Esophagus muscularis mucosa (tissue), 4 donors: ENCODE measurements at regions of chr7 and their contacts with region 1.

Region 1: GRCh38 chr7:16918288-16918895 is 36.6 kb upstream of the AGR3 start:
- DNase-seq: no peak
- H3K4me3 ChIP-seq: no peak overlapping the region
- H3K27ac ChIP-seq: no peak overlapping the region
- H3K4me1 ChIP-seq: no peaks in the 10 kb centered on the region
- H3K27me3 ChIP-seq: no peaks in the 10 kb centered on the region
- CTCF ChIP-seq: peak; percentile 61 to 77 (median 75)
- EP300 ChIP-seq: no peak
- POLR2A ChIP-seq: no peak

Region 2: DNA sequence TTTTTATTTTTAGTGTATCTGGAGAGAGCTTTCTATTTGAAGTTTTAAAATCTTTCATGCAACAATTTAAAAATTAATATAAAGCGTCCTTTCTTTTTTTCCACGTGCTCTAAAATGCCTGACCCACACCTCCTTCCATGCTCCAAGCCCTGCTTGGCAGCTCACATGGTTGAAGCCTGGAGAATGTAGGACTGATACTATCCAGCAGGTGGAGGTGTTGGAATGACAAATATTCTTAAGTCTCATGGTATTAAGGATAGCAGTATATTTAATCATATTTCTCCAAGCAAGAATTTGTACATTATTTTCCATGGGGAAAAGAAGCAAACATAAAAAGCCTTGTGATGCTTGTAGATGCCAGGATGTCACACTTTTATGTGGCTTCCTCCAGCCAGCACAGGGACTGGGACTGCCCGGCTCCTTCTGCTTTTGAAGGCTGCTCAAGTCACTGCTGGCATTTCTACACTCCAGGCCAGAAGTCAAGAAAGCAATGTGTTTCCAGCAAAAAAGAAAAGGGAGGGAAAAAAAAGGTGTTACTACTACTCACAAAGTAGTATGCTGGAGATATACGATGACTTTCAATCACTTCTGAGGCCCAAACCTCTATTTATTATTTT is 222.7 kb before region 1 on chr7:
- intact Hi-C with region 1: loop called (anchors 5 kb)
- DNase-seq: no peak
- H3K4me3 ChIP-seq: no peak overlapping the region
- H3K27ac ChIP-seq: no peak overlapping the region
- H3K4me1 ChIP-seq: no peaks in the 10 kb centered on the region
- H3K27me3 ChIP-seq: no peaks in the 10 kb centered on the region
- CTCF ChIP-seq: peak; percentile 38 to 53 (median 38)
- EP300 ChIP-seq: no peak
- POLR2A ChIP-seq: no peak

Region 3: GRCh38 chr7:16801111-16801542 is 117.3 kb before region 1 on chr7:
- intact Hi-C with region 1: loop called (anchors 1 kb)
- DNase-seq: no peak
- H3K4me3 ChIP-seq: no peak overlapping the region
- H3K27ac ChIP-seq: no peak overlapping the region
- H3K4me1 ChIP-seq: no peaks in the 10 kb centered on the region
- H3K27me3 ChIP-seq: no peaks in the 10 kb centered on the region
- CTCF ChIP-seq: peak in 2 of 3 experiments; percentile 32 to 49
- EP300 ChIP-seq: no peak
- POLR2A ChIP-seq: no peak